B cell (primary cell): ENCODE measurements at regions of chr20 and their contacts with region 1.

Region 1: GRCh38 chr20:62808211-62808865 is 3.7 kb downstream of the OGFR start:
- DNase-seq: peak; percentile 81
- ATAC-seq: peak; percentile 50
- H3K4me3 ChIP-seq: no peak overlapping the region
- H3K4me3 Mint-ChIP-seq: peak overlapping the region; percentile 72
- H3K27ac ChIP-seq: no peak overlapping the region
- H3K27ac Mint-ChIP-seq: peak overlapping the region; percentile 86
- H3K4me1 ChIP-seq: peaks cover 17 to 38% of the 10 kb centered on the region in 2 donors
- H3K4me1 Mint-ChIP-seq: peaks cover 33% of the 10 kb centered on the region
- H3K27me3 ChIP-seq: no peaks in the 10 kb centered on the region
- H3K27me3 Mint-ChIP-seq: no peaks in the 10 kb centered on the region
- CTCF ChIP-seq: peak; percentile 93

Region 2: DNA sequence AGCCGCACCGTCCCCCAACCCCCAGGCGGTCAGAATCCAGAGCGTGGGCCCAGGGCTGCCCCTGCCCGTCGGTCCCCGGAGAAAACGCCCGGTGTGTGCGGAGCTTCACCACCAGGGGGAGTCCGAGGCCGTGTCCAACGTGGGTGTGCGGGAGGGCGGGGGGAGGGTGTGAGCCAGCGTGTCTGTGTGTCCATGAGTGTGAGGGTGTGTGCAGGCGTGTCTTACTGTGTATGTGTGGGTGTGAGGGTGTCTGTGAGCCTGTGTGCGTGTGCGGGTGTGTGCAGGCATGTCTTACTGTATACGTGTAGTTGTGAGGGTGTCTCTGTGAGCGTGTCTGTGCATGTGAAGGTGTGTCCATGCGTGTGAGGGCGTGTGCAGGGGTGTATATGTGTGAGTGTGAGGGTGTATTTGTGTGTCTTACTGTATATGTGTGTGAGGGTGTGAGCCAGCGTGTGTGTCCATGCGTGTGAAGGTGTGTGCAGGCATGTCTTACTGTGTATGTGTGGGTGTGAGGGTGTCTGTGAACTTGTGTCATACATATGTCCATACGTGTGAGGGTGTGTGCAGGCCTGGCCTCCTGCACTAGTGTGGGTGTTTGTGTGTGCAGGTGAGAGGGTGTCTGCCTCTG is 308.0 kb before region 1 on chr20:
- CTCF ChIA-PET with region 1: interaction called, 36 read pairs
- POLR2A ChIA-PET with region 1: interaction called, 7 read pairs
- intact Hi-C with region 1: loop called (anchors 1 kb)
- DNase-seq: peak; percentile 87
- ATAC-seq: peak; percentile 65
- H3K4me3 ChIP-seq: no peak overlapping the region
- H3K4me3 Mint-ChIP-seq: peak overlapping the region; percentile 15
- H3K27ac ChIP-seq: no peak overlapping the region
- H3K27ac Mint-ChIP-seq: peak overlapping the region; percentile 67
- H3K4me1 ChIP-seq: peaks cover 28 to 44% of the 10 kb centered on the region in 2 donors
- H3K4me1 Mint-ChIP-seq: peaks cover 36% of the 10 kb centered on the region
- H3K27me3 ChIP-seq: peaks cover 0 to 5% (median 0%) of the 10 kb centered on the region in 4 experiments
- H3K27me3 Mint-ChIP-seq: peaks cover 3% of the 10 kb centered on the region
- CTCF ChIP-seq: peak; percentile 80

Region 3: GRCh38 chr20:62623488-62624324 is 184.6 kb before region 1 on chr20:
- CTCF ChIA-PET with region 1: interaction called, 15 read pairs
- POLR2A ChIA-PET with region 1: interaction called, 3 read pairs
- intact Hi-C with region 1: loop called (anchors 5 kb)
- DNase-seq: peak; percentile 92
- ATAC-seq: peak; percentile 87
- H3K4me3 ChIP-seq: peak overlapping the region in 4 of 5 experiments; percentile 26 to 56 (median 49)
- H3K4me3 Mint-ChIP-seq: peak overlapping the region; percentile 85
- H3K27ac ChIP-seq: peak overlapping the region; percentile 77 to 94
- H3K27ac Mint-ChIP-seq: peak overlapping the region; percentile 98
- H3K4me1 ChIP-seq: peaks cover 45 to 50% of the 10 kb centered on the region in 2 donors
- H3K4me1 Mint-ChIP-seq: peaks cover 39% of the 10 kb centered on the region
- H3K27me3 ChIP-seq: no peaks in the 10 kb centered on the region
- H3K27me3 Mint-ChIP-seq: no peaks in the 10 kb centered on the region
- CTCF ChIP-seq: no peak

Region 4: GRCh38 chr20:62776692-62777527 is 31.4 kb before region 1 on chr20:
- CTCF ChIA-PET with region 1: no interaction called
- POLR2A ChIA-PET with region 1: no interaction called
- intact Hi-C with region 1: no loop called
- DNase-seq: peak; percentile 40
- ATAC-seq: peak; percentile 82
- H3K4me3 ChIP-seq: peak overlapping the region in 2 of 5 experiments; percentile 17 to 19
- H3K4me3 Mint-ChIP-seq: peak overlapping the region; percentile 50
- H3K27ac ChIP-seq: peak overlapping the region; percentile 65 to 69
- H3K27ac Mint-ChIP-seq: peak overlapping the region; percentile 74
- H3K4me1 ChIP-seq: peaks cover 17 to 25% of the 10 kb centered on the region in 2 donors
- H3K4me1 Mint-ChIP-seq: peaks cover 25% of the 10 kb centered on the region
- H3K27me3 ChIP-seq: no peaks in the 10 kb centered on the region
- H3K27me3 Mint-ChIP-seq: no peaks in the 10 kb centered on the region
- CTCF ChIP-seq: no peak

Region 5: DNA sequence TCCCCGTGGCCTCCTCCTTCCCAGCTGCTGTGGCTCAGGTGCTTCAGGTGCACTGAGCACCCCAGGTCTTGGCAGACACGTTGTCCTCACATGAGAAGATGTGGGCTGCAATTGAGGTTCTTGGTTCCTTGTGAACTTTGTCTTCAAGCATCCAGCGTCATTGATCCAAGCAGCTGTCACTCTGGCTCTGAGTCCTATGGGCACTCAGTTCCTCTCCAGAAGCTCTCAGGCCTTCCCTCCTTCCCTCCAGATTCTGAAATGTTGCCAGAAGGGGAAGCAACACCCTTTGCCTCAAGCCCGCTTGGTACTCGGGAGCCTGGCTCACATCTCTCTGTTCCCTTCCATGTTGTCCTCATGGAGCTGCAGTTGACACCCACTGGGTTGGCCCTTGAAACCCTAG is 20.5 kb before region 1 on chr20:
- CTCF ChIA-PET with region 1: interaction called, 18 read pairs
- POLR2A ChIA-PET with region 1: no interaction called
- intact Hi-C with region 1: no loop called
- DNase-seq: no peak
- ATAC-seq: no peak
- H3K4me3 ChIP-seq: no peak overlapping the region
- H3K4me3 Mint-ChIP-seq: no peak overlapping the region
- H3K27ac ChIP-seq: no peak overlapping the region
- H3K27ac Mint-ChIP-seq: no peak overlapping the region
- H3K4me1 ChIP-seq: peaks cover 0 to 11% of the 10 kb centered on the region in 2 donors
- H3K4me1 Mint-ChIP-seq: peaks cover 8% of the 10 kb centered on the region
- H3K27me3 ChIP-seq: no peaks in the 10 kb centered on the region
- H3K27me3 Mint-ChIP-seq: no peaks in the 10 kb centered on the region
- CTCF ChIP-seq: no peak

Region 6: GRCh38 chr20:62837800-62838454 is 29.6 kb after region 1 on chr20:
- CTCF ChIA-PET with region 1: no interaction called
- POLR2A ChIA-PET with region 1: no interaction called
- intact Hi-C with region 1: loop called (anchors 1 kb)
- DNase-seq: no peak
- ATAC-seq: peak; percentile 86
- H3K4me3 ChIP-seq: peak overlapping the region in 1 of 5 experiments; percentile 1
- H3K4me3 Mint-ChIP-seq: peak overlapping the region; percentile 81
- H3K27ac ChIP-seq: peak overlapping the region; percentile 58 to 81
- H3K27ac Mint-ChIP-seq: peak overlapping the region; percentile 96
- H3K4me1 ChIP-seq: peaks cover 20 to 27% of the 10 kb centered on the region in 2 donors
- H3K4me1 Mint-ChIP-seq: peaks cover 28% of the 10 kb centered on the region
- H3K27me3 ChIP-seq: no peaks in the 10 kb centered on the region
- H3K27me3 Mint-ChIP-seq: no peaks in the 10 kb centered on the region
- CTCF ChIP-seq: no peak